ENCODE measurements at regions of chr14 and their contacts with region 1.

Region 1: DNA sequence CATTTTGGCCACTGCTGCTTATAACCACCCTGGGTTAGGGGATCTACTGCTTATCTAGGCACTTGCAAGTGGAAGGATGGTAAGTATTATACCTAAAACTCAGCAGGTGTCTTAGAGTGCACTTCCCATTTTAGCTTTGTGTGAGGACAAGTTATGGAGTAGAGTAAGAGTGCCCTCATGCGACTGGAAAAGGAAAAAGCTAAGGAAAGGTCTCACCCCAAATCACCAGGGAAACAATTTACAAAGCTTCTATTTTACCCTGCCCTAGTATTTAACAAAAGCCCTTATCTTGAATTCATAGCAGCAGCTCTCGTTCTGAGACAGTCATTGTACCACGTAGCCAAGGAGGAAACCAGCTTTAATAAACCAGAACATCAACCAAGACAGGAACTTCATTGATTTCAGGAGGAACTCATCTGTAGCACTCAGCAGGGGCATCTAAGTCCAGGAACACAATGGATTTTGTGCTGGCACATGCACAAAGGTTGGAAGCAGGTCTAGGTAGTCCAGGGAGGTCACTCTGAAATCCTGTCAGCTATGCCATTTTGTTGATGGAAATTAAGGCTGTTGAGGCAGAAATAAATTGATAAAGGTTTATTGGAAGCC is 2.9 kb downstream of the RDH12 start:
- DNase-seq: no peak
- ATAC-seq: peak; percentile 53 to 83

Region 2: GRCh38 chr14:67583711-67584644 is 120.6 kb before region 1 on chr14:
- intact Hi-C with region 1: loop called in 1 of 2 experiments (anchors 1 kb)
- DNase-seq: no peak
- ATAC-seq: peak; percentile 73

Measured in left cardiac atrium (tissue), 4 donors.